SK-N-SH (cell line): ENCODE measurements at regions of chr7 and their contacts with region 1.

Region 1: DNA sequence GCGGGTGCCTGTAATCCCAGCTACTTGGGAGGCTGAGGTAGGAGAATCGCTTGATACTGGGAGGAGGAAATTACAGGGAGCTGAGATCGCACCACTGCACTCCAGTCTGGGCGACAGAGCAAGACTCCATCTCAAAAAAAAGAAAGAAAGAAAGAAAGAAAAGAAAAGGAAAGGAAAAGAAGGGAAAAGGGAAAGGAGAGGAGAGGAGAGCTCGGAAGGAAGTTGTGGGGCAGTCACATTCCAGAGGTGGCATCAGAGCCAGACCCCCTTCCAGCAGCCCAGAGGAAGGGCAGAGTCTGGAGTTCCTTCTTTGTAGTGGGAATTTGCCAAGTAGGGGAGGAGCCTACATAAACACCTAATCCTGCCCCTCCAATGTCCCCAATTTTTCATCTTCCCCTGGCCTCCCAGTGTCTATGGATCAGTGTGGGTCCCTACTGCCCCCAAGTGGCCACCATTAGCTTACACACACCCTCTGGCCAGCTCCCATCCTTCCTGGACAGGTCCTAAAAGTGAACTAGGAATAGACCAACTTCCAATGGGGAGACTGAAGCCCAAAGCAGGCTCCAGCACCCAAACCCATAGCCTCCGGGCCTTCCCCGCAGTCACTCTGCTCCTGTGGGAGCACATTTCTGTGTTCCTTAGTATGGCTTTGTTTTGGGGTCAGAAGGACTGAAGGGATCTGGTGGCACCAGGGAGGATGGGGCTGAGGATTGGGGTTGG is 39.6 kb upstream of the HSPB1 start:
- DNase-seq: peak; percentile 88
- H3K4me3 ChIP-seq: no peak overlapping the region; a peak in 1 of 4 replicates
- H3K27ac ChIP-seq: no peak overlapping the region
- H3K4me1 ChIP-seq: peaks cover 0 to 4% of the 10 kb centered on the region in 2 experiments; a peak in 1 of 4 replicates
- H3K27me3 ChIP-seq: no peaks in the 10 kb centered on the region
- CTCF ChIP-seq: peak; percentile 95
- EP300 ChIP-seq: no peak
- RAD21 ChIP-seq: peak; percentile 99

Region 2: DNA sequence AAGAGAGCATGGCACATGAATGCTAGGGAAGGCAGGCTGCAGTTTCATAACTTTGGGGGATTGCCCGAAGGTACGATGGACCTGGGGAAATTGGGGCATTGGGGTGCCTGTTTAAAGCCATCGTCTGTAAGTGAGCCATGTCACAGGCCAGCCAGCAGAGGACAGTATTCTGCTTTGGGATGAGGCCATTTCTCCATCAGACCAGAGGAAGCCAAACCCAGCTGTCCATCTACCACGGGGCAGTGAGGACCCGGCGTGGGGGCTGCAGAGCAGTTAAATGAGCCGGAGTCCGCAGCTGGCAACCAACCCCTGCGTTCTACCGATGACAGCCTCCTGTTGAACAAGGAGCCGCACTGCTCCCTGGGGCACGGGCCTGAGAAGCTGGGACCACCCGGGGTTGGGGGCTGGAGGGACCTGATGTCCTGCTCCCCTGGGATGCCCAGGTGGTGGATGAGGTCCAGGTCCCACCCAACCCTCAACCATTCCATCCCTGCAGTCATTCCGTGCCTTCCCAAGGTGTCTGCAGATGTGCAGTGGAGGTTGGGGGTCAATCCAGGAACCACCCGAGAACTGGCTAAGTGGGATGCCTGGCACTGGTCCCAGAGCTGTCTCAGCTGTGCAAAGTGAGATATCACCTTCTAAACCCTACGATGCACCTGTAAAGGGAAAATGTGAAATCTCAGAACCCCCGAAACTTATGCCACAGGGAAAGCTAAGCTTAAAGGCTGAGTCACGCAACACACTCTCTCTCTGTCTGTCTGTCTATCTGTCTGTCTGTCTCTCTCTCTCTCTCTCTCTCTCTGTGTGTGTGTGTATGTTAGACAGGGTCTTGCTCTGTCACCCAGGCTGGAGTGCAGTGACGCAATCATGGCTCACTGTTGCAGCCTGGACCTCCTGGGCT is 396.1 kb before region 1 on chr7:
- CTCF ChIA-PET with region 1: interaction called, 10 read pairs
- POLR2A ChIA-PET with region 1: no interaction called
- DNase-seq: peak; percentile 86
- H3K4me3 ChIP-seq: no peak overlapping the region
- H3K27ac ChIP-seq: no peak overlapping the region
- H3K4me1 ChIP-seq: peaks cover 3 to 6% of the 10 kb centered on the region in 2 experiments; a peak in 1 of 4 replicates
- H3K27me3 ChIP-seq: no peaks in the 10 kb centered on the region
- CTCF ChIP-seq: peak; percentile 97
- EP300 ChIP-seq: no peak
- RAD21 ChIP-seq: peak; percentile 97

Region 3: DNA sequence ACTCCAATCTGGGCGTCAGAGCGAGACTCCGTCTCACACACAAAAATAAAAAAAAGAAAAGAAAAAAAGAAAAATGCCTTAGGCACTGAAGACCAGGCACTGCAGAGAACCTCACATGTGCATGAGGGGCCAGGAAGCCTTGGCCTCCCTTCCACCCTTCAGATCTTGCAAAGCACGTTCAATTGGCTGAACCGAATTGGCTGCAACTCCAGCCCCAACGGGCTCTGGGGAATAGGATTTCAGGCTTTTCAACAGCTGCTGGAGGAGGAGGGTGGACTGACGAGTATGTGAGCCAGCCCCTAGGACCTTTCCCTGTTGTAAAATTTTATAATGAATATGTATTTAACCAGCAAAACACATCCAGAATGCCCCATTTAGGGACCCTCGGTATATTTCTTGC is 285.1 kb before region 1 on chr7:
- CTCF ChIA-PET with region 1: no interaction called
- POLR2A ChIA-PET with region 1: no interaction called
- DNase-seq: peak; percentile 30
- H3K4me3 ChIP-seq: no peak overlapping the region
- H3K27ac ChIP-seq: no peak overlapping the region
- H3K4me1 ChIP-seq: no peaks in the 10 kb centered on the region; a peak in 1 of 4 replicates
- H3K27me3 ChIP-seq: no peaks in the 10 kb centered on the region
- CTCF ChIP-seq: no peak
- EP300 ChIP-seq: no peak
- RAD21 ChIP-seq: no peak

Region 4: DNA sequence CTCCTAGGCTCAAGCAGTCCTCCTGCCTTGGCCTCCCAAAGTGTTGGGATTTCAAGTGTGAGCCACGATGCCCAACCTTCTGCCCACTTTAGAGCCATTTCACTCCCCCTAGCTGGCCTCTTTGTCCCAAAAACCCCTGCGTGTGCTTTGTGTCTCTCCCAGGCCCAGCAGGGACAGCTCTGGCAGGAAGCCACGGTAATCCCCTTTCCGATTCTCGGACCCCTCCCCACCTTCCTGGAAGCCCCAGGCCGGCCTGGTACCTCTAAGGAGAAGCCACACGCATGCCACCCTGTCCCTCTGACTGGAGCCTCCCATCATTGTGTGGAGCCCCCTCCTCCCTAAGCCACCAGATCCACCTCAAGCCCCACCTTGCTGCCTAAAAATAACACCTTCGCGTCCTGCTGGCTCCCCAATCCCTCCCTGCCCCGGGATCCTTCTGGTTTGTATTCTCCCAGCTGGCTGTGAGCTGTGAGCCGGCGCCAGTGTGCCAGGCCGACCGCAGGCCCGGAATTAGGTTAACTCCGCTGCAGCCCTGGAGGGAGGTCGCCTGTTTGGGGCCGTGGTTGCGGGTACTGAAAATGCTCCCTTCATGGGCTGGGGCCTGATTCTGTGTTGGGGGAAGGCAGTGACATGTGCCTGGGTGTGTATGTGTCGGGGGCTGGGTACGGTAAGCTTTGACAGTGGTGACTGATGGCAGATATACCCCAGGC is 77.5 kb before region 1 on chr7:
- CTCF ChIA-PET with region 1: interaction called, 103 read pairs
- POLR2A ChIA-PET with region 1: interaction called, 11 read pairs
- DNase-seq: peak; percentile 83
- H3K4me3 ChIP-seq: no peak overlapping the region
- H3K27ac ChIP-seq: peak overlapping the region in 1 of 2 experiments; percentile 86; a peak in 2 of 4 replicates
- H3K4me1 ChIP-seq: peaks cover 0 to 9% of the 10 kb centered on the region in 2 experiments; a peak in 1 of 4 replicates
- H3K27me3 ChIP-seq: no peaks in the 10 kb centered on the region
- CTCF ChIP-seq: no peak
- EP300 ChIP-seq: peak in 1 of 2 experiments; percentile 43; a peak in 1 of 4 replicates
- RAD21 ChIP-seq: peak; percentile 34

Region 5: DNA sequence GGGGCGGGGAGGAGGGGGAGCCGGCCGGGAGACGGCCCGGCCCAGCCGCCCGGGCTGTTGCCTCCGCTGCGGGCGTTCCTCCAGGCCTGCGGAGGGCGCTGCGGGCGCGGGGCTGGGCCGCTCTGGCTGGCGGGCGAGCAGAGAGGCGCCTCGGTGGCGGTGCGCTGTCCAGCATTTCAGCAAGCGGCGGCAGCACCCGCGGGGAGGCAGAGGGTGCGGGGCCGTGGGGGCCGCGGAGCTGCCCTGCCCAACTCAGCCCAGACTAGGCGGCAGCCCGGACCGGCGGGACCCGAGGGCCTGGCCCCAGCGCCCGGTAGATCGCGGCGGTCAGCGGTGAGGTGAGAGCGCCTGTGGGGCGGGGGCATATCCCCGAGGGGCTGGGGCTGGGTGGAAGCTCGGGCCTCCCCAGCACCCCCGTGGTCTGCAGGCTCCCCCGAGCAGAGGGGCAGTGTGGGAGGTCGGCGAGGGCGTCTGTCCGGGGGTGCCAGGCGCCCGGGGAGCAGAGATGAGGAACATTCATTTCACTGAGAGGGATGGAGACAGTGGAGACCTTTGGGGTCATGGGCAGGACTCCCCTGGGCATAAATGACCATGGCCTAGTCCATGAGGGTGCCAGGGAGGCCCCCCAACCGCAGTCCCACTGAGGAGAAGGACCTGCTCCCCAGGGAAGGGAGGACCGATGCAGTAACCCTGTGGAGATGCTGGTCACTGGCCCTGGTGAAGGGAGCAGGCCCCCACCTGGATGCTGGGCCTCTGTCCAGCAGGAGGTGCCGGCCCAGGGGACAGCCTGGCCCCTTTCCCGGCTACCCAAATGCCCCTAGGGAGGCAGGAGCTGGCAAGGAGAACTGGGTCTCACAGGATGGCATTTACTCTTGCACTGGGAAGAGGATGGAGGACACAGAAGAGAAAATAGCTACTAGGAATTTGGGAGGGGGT is 60.8 kb before region 1 on chr7 and contains the start of gene SRRM3:
- CTCF ChIA-PET with region 1: interaction called, 170 read pairs
- POLR2A ChIA-PET with region 1: interaction called, 3 read pairs
- DNase-seq: peak; percentile 98
- H3K4me3 ChIP-seq: peak within 1 kb of the TSS; percentile 35 to 50; a peak in 3 of 4 replicates
- H3K27ac ChIP-seq: peak within 1 kb of the TSS in 1 of 2 experiments; percentile 75; a peak in 2 of 4 replicates
- H3K4me1 ChIP-seq: peaks cover 0 to 27% of the 10 kb centered on the region in 2 experiments; a peak in 1 of 4 replicates
- H3K27me3 ChIP-seq: peaks cover 25% of the 10 kb centered on the region
- CTCF ChIP-seq: peak; percentile 61
- EP300 ChIP-seq: peak in 1 of 2 experiments; percentile 29; a peak in 1 of 4 replicates
- RAD21 ChIP-seq: peak; percentile 24; the same call in 1 of the 2 replicates
- polyA plus RNA-seq, gene SRRM3: 2.5 and 2.7 TPM in 2 replicates

Region 6: DNA sequence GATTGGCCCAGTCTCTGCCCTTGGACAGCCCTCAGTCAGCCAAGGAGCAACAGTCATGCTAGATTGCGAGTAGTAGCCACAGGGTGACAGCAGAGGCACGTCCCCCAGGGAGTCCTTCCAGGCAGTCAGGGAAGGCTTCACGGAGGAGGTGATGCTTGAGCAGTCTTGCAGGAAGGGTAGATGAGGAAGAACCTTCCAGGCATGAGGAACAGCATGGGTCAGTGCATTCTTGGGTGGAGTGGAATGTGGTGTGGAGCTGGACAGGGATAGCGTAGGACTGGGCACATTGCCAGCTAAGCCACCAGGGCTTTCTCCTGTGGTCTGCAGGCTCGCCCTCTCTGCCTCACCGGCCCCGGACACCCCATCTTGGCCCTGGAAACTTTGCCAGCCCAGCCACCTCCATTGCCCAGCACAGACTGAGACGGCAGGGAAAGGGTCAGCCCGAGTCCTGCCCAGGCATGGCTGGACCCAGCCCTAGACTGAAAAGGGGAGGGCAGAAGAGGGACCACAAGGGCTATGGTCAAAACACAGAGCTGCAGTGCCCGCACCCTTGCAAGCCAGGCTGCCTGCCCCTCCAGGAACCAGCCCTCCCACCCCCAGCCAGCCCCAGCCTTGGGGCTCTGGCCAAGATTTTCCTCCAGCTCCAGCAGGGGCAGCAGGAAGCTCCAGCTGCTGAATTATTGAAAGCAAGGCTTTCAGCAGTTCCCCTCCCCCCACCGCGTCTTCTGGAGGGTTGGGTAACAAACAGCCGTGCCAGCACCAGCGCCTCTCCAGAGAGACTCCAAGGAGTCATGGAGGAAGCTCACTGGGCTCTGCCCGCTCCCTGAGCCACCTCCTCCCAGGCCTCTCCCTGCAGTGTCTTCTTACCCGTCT is 42.4 kb before region 1 on chr7:
- CTCF ChIA-PET with region 1: interaction called, 52 read pairs
- POLR2A ChIA-PET with region 1: no interaction called
- DNase-seq: peak; percentile 81
- H3K4me3 ChIP-seq: no peak overlapping the region
- H3K27ac ChIP-seq: peak overlapping the region in 1 of 2 experiments; percentile 36; a peak in 2 of 4 replicates
- H3K4me1 ChIP-seq: peaks cover 0 to 20% of the 10 kb centered on the region in 2 experiments; a peak in 1 of 4 replicates
- H3K27me3 ChIP-seq: peaks cover 28% of the 10 kb centered on the region; the same call in 1 of the 2 replicates
- CTCF ChIP-seq: no peak; the same call in 1 of the 2 replicates
- EP300 ChIP-seq: no peak; a peak in 1 of 4 replicates
- RAD21 ChIP-seq: peak; percentile 48

Region 7: GRCh38 chr7:76252020-76252419 is 10.8 kb before region 1 on chr7:
- CTCF ChIA-PET with region 1: interaction called, 37 read pairs
- POLR2A ChIA-PET with region 1: interaction called, 3 read pairs
- DNase-seq: no peak
- H3K4me3 ChIP-seq: no peak overlapping the region
- H3K27ac ChIP-seq: peak overlapping the region in 1 of 2 experiments; percentile 87; a peak in 1 of 4 replicates
- H3K4me1 ChIP-seq: peaks cover 0 to 17% of the 10 kb centered on the region in 2 experiments; a peak in 1 of 4 replicates
- H3K27me3 ChIP-seq: no peaks in the 10 kb centered on the region
- CTCF ChIP-seq: no peak
- EP300 ChIP-seq: no peak
- RAD21 ChIP-seq: no peak

Region 8: DNA sequence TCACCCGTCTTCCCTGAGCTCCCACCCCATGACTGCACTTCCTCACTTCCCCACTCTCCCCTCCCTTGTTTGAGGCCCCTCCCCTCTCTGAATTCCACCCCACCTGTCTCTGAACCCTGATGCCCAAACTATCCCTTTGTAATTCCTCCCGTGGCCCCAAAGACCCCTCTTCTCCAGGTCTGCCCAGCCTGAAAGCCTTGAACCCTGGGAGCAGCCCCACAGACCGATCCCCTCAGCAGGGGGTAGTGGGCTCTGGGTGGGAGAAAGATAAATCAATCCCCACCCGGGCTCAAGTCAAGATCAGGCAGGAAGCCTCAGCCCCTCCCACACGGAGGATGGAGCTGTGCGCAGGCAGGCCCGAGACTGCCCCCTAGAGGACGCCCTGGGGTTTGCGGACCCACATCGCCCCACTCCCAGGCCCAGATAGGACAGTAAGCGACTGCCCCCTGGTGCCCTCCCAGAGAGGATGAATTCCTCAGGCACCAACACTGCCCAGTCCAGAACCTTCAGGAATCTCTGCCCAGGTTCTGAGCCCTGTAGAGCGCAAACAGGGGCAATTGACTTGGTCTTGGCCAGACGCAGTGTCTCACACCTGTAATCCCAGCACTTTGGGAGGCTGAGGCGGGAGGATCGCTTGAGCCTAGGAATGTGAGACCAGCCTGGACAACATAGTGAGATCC is 51.3 kb after region 1 on chr7:
- CTCF ChIA-PET with region 1: interaction called, 107 read pairs
- POLR2A ChIA-PET with region 1: interaction called, 5 read pairs
- DNase-seq: peak; percentile 97
- H3K4me3 ChIP-seq: no peak overlapping the region; a peak in 2 of 4 replicates
- H3K27ac ChIP-seq: no peak overlapping the region
- H3K4me1 ChIP-seq: peaks cover 4 to 26% of the 10 kb centered on the region in 2 experiments; a peak in 2 of 4 replicates
- H3K27me3 ChIP-seq: no peaks in the 10 kb centered on the region
- CTCF ChIP-seq: peak; percentile 100
- EP300 ChIP-seq: peak in 1 of 2 experiments; percentile 69; a peak in 3 of 4 replicates
- RAD21 ChIP-seq: peak; percentile 100